Psoas muscle (tissue), 8 donors: ENCODE measurements at regions of chr7 and their contacts with region 1.

Region 1: DNA sequence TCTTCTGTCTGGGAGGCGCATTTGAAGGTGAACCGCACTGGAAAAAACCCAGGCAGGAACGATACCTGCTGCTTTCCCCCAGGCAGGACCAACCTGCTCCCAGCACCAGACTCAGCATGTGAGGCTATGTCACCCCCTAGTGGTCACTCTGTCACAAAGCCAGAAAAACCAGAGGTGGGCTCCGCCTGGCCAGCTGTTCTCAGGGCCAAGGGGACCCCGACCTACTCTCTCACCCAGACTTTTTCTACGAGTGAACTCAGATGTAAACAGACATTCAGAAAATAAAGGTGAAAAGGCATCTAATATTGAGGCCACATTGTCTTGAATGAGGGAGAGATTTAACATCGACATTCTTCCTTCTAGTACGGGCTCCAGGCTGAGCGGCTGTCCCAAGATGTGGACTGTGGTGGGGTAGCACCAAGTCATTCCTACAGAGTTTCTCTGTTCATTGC is 117.3 kb downstream of the PRKAG2 start:
- DNase-seq: peak; percentile 46 to 62
- ATAC-seq: peak; percentile 73 to 79 (median 76)
- H3K4me3 ChIP-seq: no peak overlapping the region
- H3K27ac ChIP-seq: no peak overlapping the region
- H3K4me1 ChIP-seq: peaks cover 7% of the 10 kb centered on the region
- H3K27me3 ChIP-seq: no peaks in the 10 kb centered on the region
- CTCF ChIP-seq: peak; percentile 92

Region 2: DNA sequence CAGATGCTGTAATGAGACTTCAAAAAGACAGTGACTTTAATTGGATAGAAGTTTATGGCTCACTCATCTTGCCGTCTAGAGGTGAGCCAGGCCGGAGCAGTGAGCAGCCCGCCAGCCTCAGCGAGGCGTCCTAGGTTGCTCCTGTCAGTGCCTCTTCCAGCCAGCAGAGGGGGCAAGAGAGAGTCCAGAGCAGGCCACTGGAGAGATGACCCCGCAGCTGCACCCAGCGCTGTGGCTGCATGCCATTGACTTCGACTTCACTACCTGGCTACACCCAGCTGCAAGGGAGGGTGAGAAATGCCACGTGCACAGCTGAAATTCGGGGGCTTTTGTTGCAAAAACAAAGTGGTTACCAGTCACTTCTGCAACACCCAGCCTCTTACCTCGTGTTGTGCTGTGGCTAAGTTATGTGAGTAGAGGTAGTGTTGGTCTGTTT is 391.5 kb before region 1 on chr7:
- intact Hi-C with region 1: loop called (anchors 2 to 5 kb)
- DNase-seq: peak; percentile 81 to 91
- ATAC-seq: peak; percentile 96 to 99 (median 98)
- H3K4me3 ChIP-seq: no peak overlapping the region
- H3K27ac ChIP-seq: no peak overlapping the region
- H3K4me1 ChIP-seq: peaks cover 4% of the 10 kb centered on the region
- H3K27me3 ChIP-seq: no peaks in the 10 kb centered on the region
- CTCF ChIP-seq: peak; percentile 95

Region 3: DNA sequence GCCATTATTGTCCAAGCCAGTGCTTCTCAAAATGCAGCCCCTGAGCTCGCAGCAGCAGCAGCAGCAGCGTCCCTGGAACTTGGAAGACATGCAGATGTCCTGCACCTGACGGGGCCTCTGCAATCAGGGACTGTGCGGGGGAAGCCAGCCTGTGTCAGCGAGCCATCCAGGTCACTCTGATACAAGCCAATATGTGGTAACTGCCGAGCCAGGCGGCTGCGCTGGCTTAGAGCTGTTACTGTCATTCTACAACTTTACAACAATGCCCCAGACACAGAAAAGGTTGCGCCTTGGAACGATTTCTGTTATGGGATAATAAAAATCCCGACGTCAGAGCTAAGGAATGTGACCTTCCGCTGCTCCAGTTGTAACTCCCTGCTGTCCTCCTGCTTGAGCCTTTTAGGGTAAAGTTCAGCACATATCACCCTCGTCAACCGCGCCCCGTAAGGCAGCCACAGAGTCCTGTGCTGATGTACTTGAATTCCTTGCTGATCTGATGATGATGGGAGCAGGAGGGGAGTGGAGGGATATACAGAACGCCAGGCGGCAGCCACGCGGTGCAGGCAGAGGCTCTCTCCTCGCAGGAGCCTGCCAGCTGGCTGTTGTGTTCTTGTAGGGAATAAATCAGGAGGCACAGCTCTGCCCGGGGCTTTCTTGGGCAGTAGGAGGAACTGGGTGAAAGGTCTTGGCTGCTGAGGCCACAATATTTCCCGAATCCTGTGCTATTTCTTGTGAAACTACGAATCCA is 299.7 kb before region 1 on chr7:
- intact Hi-C with region 1: loop called (anchors 10 kb)
- DNase-seq: peak; percentile 84 to 90
- ATAC-seq: peak; percentile 84 to 85 (median 84)
- H3K4me3 ChIP-seq: peak overlapping the region; percentile 42
- H3K27ac ChIP-seq: peak overlapping the region; percentile 91
- H3K4me1 ChIP-seq: peaks cover 25% of the 10 kb centered on the region
- H3K27me3 ChIP-seq: no peaks in the 10 kb centered on the region
- CTCF ChIP-seq: no peak

Region 4: DNA sequence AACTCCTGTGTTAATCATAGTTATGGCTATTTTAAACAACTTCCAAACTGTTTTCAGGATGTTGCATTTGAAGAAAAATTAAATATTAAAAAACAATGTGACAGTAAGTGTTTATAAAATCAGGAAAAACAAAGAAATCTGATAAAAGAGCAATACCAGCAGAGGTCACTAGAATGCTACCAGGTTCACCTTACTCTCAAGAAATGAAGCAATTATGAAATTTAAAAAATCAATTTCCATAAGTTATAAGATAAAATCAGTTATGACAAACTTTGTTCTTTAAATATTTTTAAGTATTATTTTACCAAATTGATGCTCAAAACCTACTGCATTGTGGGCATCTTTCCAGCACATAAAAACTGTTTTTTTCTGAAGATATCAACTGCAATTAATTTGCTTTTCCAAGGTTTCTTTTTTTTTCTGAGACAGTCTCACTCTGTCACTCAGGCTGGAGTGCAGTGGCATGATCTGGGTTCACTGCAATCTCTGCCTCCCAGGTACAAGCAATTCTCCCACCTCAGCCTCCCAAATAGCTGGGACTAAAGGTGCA is 189.2 kb before region 1 on chr7:
- intact Hi-C with region 1: loop called (anchors 2 to 10 kb)
- DNase-seq: no peak
- ATAC-seq: no peak
- H3K4me3 ChIP-seq: no peak overlapping the region
- H3K27ac ChIP-seq: no peak overlapping the region
- H3K4me1 ChIP-seq: no peaks in the 10 kb centered on the region
- H3K27me3 ChIP-seq: no peaks in the 10 kb centered on the region
- CTCF ChIP-seq: peak; percentile 44

Region 5: GRCh38 chr7:151626422-151627115 is 133.0 kb before region 1 on chr7:
- intact Hi-C with region 1: loop called (anchors 1 to 2 kb)
- DNase-seq: peak; percentile 30 to 68
- ATAC-seq: peak; percentile 91 to 95 (median 93)
- H3K4me3 ChIP-seq: no peak overlapping the region
- H3K27ac ChIP-seq: no peak overlapping the region
- H3K4me1 ChIP-seq: peaks cover 9% of the 10 kb centered on the region
- H3K27me3 ChIP-seq: no peaks in the 10 kb centered on the region
- CTCF ChIP-seq: peak; percentile 66